ENCODE measurements at regions of chr3 and their contacts with region 1.

Region 1: GRCh38 chr3:14791343-14791945 is 27.3 kb upstream of the FGD5 start:
- DNase-seq: peak; percentile 57 to 89
- H3K4me3 ChIP-seq: peak overlapping the region in 1 of 4 experiments; percentile 42; a peak in 1 of 8 replicates
- H3K27ac ChIP-seq: no peak overlapping the region
- H3K4me1 ChIP-seq: peaks cover 0 to 4% (median 2%) of the 10 kb centered on the region in 4 experiments; a peak in 4 of 7 replicates
- H3K27me3 ChIP-seq: peaks cover 0 to 3% (median 0%) of the 10 kb centered on the region in 4 experiments; a peak in 1 of 7 replicates
- CTCF ChIP-seq: peak; percentile 91 to 97 (median 96)
- EP300 ChIP-seq: no peak
- POLR2A ChIP-seq: no peak
- RAD21 ChIP-seq: peak; percentile 97 to 98

Region 2: DNA sequence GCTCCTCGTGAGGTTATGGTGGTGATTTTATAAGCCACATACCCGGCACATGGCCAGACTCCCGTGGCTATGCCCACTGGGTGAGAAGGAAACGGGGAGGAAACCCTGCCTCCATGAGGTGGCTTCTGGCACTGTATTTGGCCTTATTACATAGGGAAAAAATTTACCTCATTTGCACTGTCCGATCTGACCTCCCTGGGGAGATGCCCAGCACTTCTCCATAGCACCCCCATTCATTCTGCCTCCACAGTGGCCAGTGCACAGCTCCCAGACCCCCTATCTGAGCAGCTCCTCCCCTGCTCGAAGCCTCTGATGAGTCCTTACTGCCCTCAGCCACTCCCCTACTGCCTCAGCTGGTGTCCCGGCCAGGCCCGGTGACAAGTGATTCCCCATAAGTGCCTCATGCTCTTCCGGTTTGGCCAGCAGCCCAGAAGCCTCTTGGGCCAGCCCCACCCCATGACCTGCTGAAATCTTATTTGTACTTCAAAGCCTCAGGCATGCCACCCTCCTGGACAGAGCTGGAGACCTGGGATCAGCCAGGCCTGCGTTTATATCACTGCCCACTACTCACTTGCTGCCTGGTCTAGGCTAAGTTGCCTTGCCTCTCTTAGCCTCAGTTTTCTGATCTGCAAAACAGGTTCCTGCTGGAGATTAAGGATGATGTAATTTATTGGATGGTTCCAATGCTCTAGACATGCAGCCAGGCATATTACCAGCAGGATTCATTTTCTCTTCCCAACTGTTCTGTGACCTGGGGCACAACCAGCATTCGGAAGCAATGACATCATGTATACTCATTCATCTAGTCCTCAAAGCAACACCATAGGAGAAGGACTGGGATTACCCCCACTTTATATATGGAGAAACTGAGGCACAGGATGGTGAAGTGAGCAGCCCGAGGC is 419.6 kb before region 1 on chr3:
- CTCF ChIA-PET with region 1: no interaction called
- POLR2A ChIA-PET with region 1: no interaction called
- DNase-seq: no peak
- H3K4me3 ChIP-seq: no peak overlapping the region
- H3K27ac ChIP-seq: no peak overlapping the region
- H3K4me1 ChIP-seq: peaks cover 2 to 21% (median 5%) of the 10 kb centered on the region in 4 experiments; a peak in 6 of 7 replicates
- H3K27me3 ChIP-seq: no peaks in the 10 kb centered on the region
- CTCF ChIP-seq: no peak
- EP300 ChIP-seq: no peak
- POLR2A ChIP-seq: no peak
- RAD21 ChIP-seq: no peak

Region 3: GRCh38 chr3:14803101-14803980 is 11.9 kb after region 1 on chr3:
- CTCF ChIA-PET with region 1: interaction called, 14 read pairs
- POLR2A ChIA-PET with region 1: interaction called, 3 read pairs
- DNase-seq: no peak
- H3K4me3 ChIP-seq: no peak overlapping the region
- H3K27ac ChIP-seq: no peak overlapping the region
- H3K4me1 ChIP-seq: peaks cover 0 to 5% (median 0%) of the 10 kb centered on the region in 4 experiments; a peak in 1 of 7 replicates
- H3K27me3 ChIP-seq: peaks cover 0 to 5% (median 3%) of the 10 kb centered on the region in 4 experiments; a peak in 5 of 7 replicates
- CTCF ChIP-seq: peak in 1 of 3 experiments; percentile 21; a peak in 1 of 4 replicates
- EP300 ChIP-seq: no peak
- POLR2A ChIP-seq: no peak
- RAD21 ChIP-seq: no peak

Region 4: DNA sequence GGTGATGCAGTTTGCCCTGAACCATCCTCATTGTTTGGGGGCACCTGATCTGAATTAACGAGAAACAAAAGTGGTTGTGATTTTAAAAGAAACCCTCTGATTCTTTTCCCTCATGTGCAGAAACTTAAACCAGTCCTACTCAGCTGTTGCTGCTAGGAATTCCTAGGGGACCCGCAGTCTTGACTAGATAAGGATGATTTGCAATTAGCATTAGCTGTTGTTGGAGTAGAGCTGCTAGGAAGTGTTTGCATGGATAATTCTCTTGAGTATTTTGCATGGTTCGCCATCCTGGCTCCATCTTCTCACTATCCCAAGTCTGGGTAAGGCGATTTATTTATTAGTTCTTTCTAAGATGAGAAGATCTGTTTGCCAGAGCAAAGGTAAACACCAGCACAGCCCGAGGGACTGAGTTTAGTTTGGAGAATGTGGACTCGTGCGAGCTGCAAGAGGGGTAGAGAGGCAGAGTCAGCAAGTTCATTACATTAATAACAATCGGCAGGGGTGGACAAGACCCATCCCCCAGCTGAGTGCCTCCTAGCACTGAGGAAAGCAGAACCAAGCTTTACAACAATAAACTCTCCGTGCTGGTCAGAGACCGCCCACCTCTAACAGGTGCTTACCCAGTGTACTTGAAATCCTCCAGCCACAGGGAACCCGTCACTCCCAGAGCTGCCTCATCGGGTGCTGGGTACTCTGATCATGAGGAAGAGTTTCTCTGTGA is 31.4 kb after region 1 on chr3:
- CTCF ChIA-PET with region 1: interaction called, 11 read pairs
- POLR2A ChIA-PET with region 1: no interaction called
- DNase-seq: no peak
- H3K4me3 ChIP-seq: no peak overlapping the region
- H3K27ac ChIP-seq: no peak overlapping the region
- H3K4me1 ChIP-seq: peaks cover 3 to 7% (median 5%) of the 10 kb centered on the region in 4 experiments; a peak in 6 of 7 replicates
- H3K27me3 ChIP-seq: no peaks in the 10 kb centered on the region
- CTCF ChIP-seq: no peak
- EP300 ChIP-seq: no peak
- POLR2A ChIP-seq: no peak
- RAD21 ChIP-seq: no peak

Region 5: GRCh38 chr3:14829811-14830210 is 38.4 kb after region 1 on chr3:
- CTCF ChIA-PET with region 1: interaction called, 11 read pairs
- POLR2A ChIA-PET with region 1: no interaction called
- DNase-seq: no peak
- H3K4me3 ChIP-seq: no peak overlapping the region
- H3K27ac ChIP-seq: no peak overlapping the region
- H3K4me1 ChIP-seq: peaks cover 0 to 4% (median 2%) of the 10 kb centered on the region in 4 experiments; a peak in 4 of 7 replicates
- H3K27me3 ChIP-seq: no peaks in the 10 kb centered on the region
- CTCF ChIP-seq: no peak
- EP300 ChIP-seq: no peak
- POLR2A ChIP-seq: no peak
- RAD21 ChIP-seq: no peak

Region 6: GRCh38 chr3:14847613-14848541 is 56.4 kb after region 1 on chr3:
- CTCF ChIA-PET with region 1: interaction called, 109 read pairs
- POLR2A ChIA-PET with region 1: no interaction called
- DNase-seq: peak; percentile 38 to 66
- H3K4me3 ChIP-seq: peak overlapping the region in 1 of 4 experiments; percentile 11; a peak in 1 of 8 replicates
- H3K27ac ChIP-seq: 0 out of 2 replicates have a peak overlapping the region, but pooled peaks have one; percentile 12
- H3K4me1 ChIP-seq: peaks cover 14 to 35% (median 22%) of the 10 kb centered on the region in 4 experiments
- H3K27me3 ChIP-seq: no peaks in the 10 kb centered on the region
- CTCF ChIP-seq: no peak
- EP300 ChIP-seq: peak in 1 of 2 experiments; percentile 62; a peak in 1 of 3 replicates
- POLR2A ChIP-seq: peak in 1 of 2 experiments; percentile 22; a peak in 1 of 3 replicates
- RAD21 ChIP-seq: peak in 1 of 2 experiments; percentile 17; a peak in 1 of 4 replicates

Region 7: DNA sequence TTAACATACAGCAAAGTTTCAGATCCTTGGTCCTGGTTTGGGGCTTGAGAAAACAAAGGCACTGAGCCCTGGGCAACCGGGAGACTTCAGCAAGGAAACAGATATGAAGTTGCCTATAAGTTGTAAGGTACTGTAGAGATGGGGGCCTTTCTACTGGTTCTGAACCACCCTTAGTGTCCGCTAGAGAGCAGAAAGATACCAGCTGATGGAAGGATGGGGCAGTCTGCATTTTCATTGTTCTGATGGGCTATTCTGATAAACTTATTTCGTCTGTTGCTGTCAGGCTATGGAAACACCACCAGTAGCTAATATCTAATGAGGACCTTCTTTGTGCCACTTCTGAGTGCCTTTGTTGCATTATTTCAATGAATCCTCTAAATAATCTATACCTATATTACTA is 66.1 kb after region 1 on chr3:
- CTCF ChIA-PET with region 1: interaction called, 54 read pairs
- POLR2A ChIA-PET with region 1: no interaction called
- DNase-seq: no peak
- H3K4me3 ChIP-seq: no peak overlapping the region
- H3K27ac ChIP-seq: no peak overlapping the region
- H3K4me1 ChIP-seq: peaks cover 3 to 8% (median 5%) of the 10 kb centered on the region in 4 experiments
- H3K27me3 ChIP-seq: no peaks in the 10 kb centered on the region; a peak in 1 of 7 replicates
- CTCF ChIP-seq: peak in 2 of 3 experiments; percentile 55 to 59; a peak in 3 of 4 replicates
- EP300 ChIP-seq: no peak
- POLR2A ChIP-seq: no peak
- RAD21 ChIP-seq: peak; percentile 78 to 82

Region 8: GRCh38 chr3:14902719-14903118 is 111.3 kb after region 1 on chr3:
- CTCF ChIA-PET with region 1: interaction called, 11 read pairs
- POLR2A ChIA-PET with region 1: no interaction called
- DNase-seq: no peak
- H3K4me3 ChIP-seq: no peak overlapping the region
- H3K27ac ChIP-seq: no peak overlapping the region
- H3K4me1 ChIP-seq: peaks cover 3 to 26% (median 19%) of the 10 kb centered on the region in 4 experiments
- H3K27me3 ChIP-seq: no peaks in the 10 kb centered on the region
- CTCF ChIP-seq: no peak
- EP300 ChIP-seq: no peak
- POLR2A ChIP-seq: no peak
- RAD21 ChIP-seq: no peak